Activated CD8-positive, alpha-beta T cell treated with anti-CD3 and anti-CD28 coated beads for 36 hours (primary cell): ENCODE measurements at regions of chr12 and their contacts with region 1.

Region 1: DNA sequence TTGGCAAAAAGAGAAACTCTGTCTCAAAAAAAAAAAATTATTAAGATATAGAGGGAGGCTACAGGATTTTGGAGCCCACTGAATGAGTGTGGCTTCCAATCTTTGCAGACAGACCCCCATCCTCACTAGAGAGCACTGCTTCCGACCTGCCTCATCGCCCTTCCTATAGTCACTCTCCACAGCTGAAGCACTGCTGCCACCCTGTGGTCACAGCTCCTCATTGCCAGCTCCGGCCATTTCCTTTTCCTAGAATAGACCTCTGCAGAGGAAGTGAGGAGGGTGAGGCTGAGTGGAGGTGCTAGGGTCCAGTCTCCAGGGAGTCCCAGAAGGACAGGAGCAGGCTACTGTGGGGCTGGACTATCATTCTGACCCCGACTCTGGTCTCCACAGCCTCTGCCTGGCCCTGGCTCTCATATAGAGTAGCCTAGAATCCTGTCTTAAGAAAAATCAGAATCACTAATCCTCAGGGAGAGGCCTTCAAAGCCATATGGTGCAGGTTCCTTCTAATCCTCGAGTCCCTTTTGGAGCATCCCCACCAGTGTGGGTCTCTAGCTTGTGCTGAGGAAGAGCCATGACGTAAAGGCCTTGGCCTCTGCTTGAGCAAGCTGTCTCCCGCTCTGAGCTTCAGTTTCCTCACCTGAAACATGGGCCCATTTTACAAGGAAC is 1.4 kb upstream of the NPFF start:
- DNase-seq: peak; percentile 93
- ATAC-seq: peak; percentile 100
- H3K4me3 Mint-ChIP-seq: no peak overlapping the region
- H3K27ac Mint-ChIP-seq: peak overlapping the region; percentile 58
- H3K4me1 Mint-ChIP-seq: peaks cover 12% of the 10 kb centered on the region
- H3K27me3 Mint-ChIP-seq: no peaks in the 10 kb centered on the region
- CTCF ChIP-seq: peak; percentile 92

Region 2: DNA sequence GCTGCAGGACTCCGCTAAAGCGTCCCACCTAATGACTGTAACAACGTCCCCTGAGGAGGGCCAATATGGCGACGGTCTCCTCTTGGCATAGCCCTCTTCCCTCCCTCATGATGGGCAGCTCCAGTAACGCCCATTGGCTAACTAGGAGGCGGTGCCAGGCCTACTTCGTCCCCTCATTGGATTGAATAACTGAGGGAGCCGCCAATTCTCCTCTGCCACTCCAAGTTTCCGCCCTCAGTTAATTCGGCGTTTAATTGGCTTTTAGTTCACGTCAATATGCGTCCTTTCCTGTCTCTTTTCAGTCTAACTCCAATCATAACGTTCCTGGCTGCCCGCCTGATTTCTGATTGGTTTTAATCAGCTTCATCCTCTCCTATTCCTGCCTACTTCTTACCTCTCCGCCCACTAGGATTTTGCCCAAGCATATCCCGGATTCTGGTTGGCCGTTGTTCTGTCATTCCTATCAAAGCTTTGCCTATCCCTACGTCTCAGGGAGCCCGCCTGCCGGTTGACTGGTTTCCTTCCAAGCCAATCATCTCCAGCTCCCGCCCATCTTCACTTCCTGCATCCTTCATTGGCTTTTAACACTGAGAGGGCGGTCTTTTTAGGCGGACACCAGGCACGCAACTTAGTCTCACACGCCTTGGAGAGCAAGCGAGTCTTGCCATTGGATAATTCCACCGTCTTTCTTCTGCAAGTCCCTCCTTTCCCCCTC is 129.1 kb before region 1 on chr12:
- CTCF ChIA-PET with region 1: interaction called, 10 read pairs
- POLR2A ChIA-PET with region 1: no interaction called
- intact Hi-C with region 1: no loop called
- DNase-seq: peak; percentile 99
- ATAC-seq: peak; percentile 76
- H3K4me3 Mint-ChIP-seq: no peak overlapping the region
- H3K27ac Mint-ChIP-seq: no peak overlapping the region
- H3K4me1 Mint-ChIP-seq: peaks cover 36% of the 10 kb centered on the region
- H3K27me3 Mint-ChIP-seq: no peaks in the 10 kb centered on the region
- CTCF ChIP-seq: no peak

Region 3: DNA sequence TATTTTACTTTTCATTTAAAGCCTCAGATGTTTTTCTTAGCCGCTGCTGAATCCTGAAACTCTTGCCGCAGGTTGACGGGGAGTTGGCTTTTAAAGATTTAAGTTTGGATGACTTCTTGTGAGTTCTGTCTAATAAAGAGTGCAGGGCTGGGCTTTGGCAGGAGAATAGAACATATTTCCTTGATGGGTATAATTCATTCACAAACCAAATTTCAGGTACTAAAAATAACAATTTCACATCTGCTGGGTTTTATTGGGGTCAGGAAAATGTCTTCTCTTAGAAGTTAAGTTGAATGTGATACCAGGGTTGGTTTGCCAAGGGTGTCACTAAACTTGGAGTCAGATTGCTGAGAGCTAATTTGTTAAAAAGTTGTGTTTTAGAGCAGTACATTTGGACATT is 119.0 kb before region 1 on chr12:
- CTCF ChIA-PET with region 1: no interaction called
- POLR2A ChIA-PET with region 1: no interaction called
- intact Hi-C with region 1: no loop called
- DNase-seq: no peak
- ATAC-seq: no peak
- H3K4me3 Mint-ChIP-seq: peak overlapping the region; percentile 7
- H3K27ac Mint-ChIP-seq: peak overlapping the region; percentile 22
- H3K4me1 Mint-ChIP-seq: peaks cover 49% of the 10 kb centered on the region
- H3K27me3 Mint-ChIP-seq: no peaks in the 10 kb centered on the region
- CTCF ChIP-seq: no peak

Region 4: DNA sequence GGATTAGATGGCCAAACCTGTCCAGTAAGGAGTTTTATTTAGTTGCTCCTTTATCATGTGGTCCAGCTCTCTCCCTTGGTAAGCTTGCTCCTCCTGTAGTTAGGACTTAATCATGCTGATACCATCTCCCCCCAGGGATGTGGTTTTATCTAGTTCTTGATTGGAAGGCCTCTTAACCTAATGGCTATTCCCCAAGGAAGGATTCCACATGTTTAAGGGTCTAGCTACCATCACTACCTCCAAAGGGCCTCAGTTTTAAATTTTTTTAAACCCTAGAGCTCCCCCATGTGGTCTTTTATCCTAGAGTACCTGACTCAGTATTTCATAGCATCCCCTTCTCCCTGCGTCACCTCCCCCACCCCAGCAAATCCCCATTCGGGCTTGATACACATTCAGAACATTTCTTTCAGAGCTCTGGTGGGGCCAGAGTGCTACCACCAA is 31.9 kb before region 1 on chr12:
- CTCF ChIA-PET with region 1: interaction called, 66 read pairs
- POLR2A ChIA-PET with region 1: interaction called, 1,494 read pairs
- intact Hi-C with region 1: loop called (anchors 5 kb)
- DNase-seq: no peak
- ATAC-seq: no peak
- H3K4me3 Mint-ChIP-seq: no peak overlapping the region
- H3K27ac Mint-ChIP-seq: peak overlapping the region; percentile 34
- H3K4me1 Mint-ChIP-seq: peaks cover 52% of the 10 kb centered on the region
- H3K27me3 Mint-ChIP-seq: no peaks in the 10 kb centered on the region
- CTCF ChIP-seq: peak; percentile 43

Region 5: DNA sequence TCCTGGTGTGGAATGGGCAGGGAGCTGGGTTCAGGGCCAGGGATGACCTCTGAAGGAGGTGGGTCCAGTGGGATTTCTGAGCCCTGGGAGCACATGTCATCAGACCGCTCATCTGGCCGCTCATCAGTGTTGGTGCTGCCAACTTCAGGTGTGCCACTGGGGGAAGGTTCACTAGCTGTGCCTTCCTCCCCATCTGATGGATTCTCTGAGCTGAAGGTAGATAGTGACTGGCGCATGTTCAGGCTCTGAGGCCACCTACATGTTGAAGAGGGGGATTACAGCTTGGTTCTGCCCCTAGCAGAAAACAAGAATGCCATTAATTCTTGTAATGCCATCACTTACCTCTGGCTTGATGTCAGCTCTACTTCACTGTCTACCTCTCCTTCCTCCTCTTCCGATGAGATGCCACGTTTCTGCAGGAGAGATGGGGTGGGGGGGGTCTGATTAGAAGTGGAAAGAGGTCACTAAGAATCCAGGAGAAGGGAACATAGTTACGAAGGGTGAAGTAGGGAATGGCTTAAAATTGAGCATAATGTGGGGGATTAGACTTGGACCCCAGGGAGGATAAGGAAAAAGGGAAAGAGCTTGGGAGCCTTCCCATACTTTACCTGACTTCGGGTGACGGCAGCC is 26.6 kb before region 1 on chr12:
- CTCF ChIA-PET with region 1: interaction called, 66 read pairs
- POLR2A ChIA-PET with region 1: interaction called, 1,494 read pairs
- intact Hi-C with region 1: no loop called
- DNase-seq: peak; percentile 20
- ATAC-seq: peak; percentile 53
- H3K4me3 Mint-ChIP-seq: no peak overlapping the region
- H3K27ac Mint-ChIP-seq: peak overlapping the region; percentile 61
- H3K4me1 Mint-ChIP-seq: peaks cover 16% of the 10 kb centered on the region
- H3K27me3 Mint-ChIP-seq: no peaks in the 10 kb centered on the region
- CTCF ChIP-seq: peak; percentile 28

Region 6: GRCh38 chr12:53492830-53493611 is 15.6 kb before region 1 on chr12:
- CTCF ChIA-PET with region 1: interaction called, 19 read pairs
- POLR2A ChIA-PET with region 1: interaction called, 1,494 read pairs
- intact Hi-C with region 1: no loop called
- DNase-seq: peak; percentile 92
- ATAC-seq: peak; percentile 96
- H3K4me3 Mint-ChIP-seq: peak overlapping the region; percentile 80
- H3K27ac Mint-ChIP-seq: peak overlapping the region; percentile 88
- H3K4me1 Mint-ChIP-seq: peaks cover 23% of the 10 kb centered on the region
- H3K27me3 Mint-ChIP-seq: no peaks in the 10 kb centered on the region
- CTCF ChIP-seq: no peak

Region 7: GRCh38 chr12:53550595-53550994 is 41.9 kb after region 1 on chr12:
- CTCF ChIA-PET with region 1: no interaction called
- POLR2A ChIA-PET with region 1: no interaction called
- intact Hi-C with region 1: no loop called
- DNase-seq: no peak
- ATAC-seq: no peak
- H3K4me3 Mint-ChIP-seq: no peak overlapping the region
- H3K27ac Mint-ChIP-seq: no peak overlapping the region
- H3K4me1 Mint-ChIP-seq: peaks cover 9% of the 10 kb centered on the region
- H3K27me3 Mint-ChIP-seq: no peaks in the 10 kb centered on the region
- CTCF ChIP-seq: no peak

Region 8: DNA sequence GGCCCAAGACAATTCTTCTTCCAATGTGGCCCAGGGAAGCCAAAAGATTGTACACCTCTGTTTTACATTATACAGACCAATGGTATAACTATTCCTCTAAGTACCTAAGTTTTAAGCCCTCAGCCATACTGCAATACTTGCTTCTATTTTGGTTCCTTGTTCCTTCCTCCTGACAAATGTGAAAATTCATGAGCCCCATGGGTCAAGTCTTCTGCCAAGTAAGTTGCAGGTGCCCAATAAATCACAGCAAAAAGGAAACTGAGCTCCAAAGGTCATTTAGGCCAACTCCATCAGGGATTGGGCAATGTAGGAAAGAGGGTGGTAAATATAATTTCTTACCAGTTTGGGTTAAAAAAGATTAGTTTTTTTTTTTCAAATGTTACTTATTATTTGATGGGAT is 56.3 kb after region 1 on chr12:
- CTCF ChIA-PET with region 1: no interaction called
- POLR2A ChIA-PET with region 1: no interaction called
- intact Hi-C with region 1: no loop called
- DNase-seq: no peak
- ATAC-seq: no peak
- H3K4me3 Mint-ChIP-seq: no peak overlapping the region
- H3K27ac Mint-ChIP-seq: no peak overlapping the region
- H3K4me1 Mint-ChIP-seq: peaks cover 42% of the 10 kb centered on the region
- H3K27me3 Mint-ChIP-seq: no peaks in the 10 kb centered on the region
- CTCF ChIP-seq: no peak

Region 9: DNA sequence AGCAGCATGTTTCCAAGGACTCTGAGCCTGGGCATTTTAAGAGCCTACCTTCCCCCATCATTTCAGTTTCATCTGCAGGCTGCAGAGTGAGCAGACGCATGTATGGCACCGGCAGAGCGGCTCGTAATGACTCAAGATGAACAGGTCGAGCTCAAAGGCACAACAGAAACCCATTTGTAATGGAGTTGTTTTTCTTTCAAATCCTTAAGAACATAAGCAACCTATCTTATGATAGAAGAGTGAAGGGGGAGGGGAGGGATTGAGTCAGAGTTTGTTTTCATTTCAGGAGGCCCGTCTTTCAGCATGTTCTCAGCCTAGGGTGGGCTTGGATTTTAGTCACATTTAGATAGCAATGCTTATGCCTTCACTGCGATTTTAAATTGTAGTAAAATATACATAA is 298.1 kb after region 1 on chr12:
- CTCF ChIA-PET with region 1: no interaction called
- POLR2A ChIA-PET with region 1: no interaction called
- intact Hi-C with region 1: no loop called
- DNase-seq: no peak
- ATAC-seq: no peak
- H3K4me3 Mint-ChIP-seq: no peak overlapping the region
- H3K27ac Mint-ChIP-seq: no peak overlapping the region
- H3K4me1 Mint-ChIP-seq: no peaks in the 10 kb centered on the region
- H3K27me3 Mint-ChIP-seq: peaks cover 28% of the 10 kb centered on the region
- CTCF ChIP-seq: no peak